Common myeloid progenitor, CD34-positive (primary cell): ENCODE measurements at regions of chr11 and their contacts with region 1.

Region 1: GRCh38 chr11:72144807-72145560 is 9.5 kb downstream of the FOLR3 start:
- DNase-seq: no peak
- H3K4me3 ChIP-seq: no peak overlapping the region
- H3K27ac ChIP-seq: no peak overlapping the region
- H3K4me1 ChIP-seq: peaks cover 0 to 4% (median 2%) of the 10 kb centered on the region in 4 experiments
- H3K27me3 ChIP-seq: no peaks in the 10 kb centered on the region

Region 2: GRCh38 chr11:71895961-71896360 is 249.0 kb before region 1 on chr11:
- CTCF ChIA-PET with region 1: no interaction called
- POLR2A ChIA-PET with region 1: no interaction called
- DNase-seq: no peak
- H3K4me3 ChIP-seq: no peak overlapping the region
- H3K27ac ChIP-seq: no peak overlapping the region
- H3K4me1 ChIP-seq: no peaks in the 10 kb centered on the region
- H3K27me3 ChIP-seq: no peaks in the 10 kb centered on the region

Region 3: DNA sequence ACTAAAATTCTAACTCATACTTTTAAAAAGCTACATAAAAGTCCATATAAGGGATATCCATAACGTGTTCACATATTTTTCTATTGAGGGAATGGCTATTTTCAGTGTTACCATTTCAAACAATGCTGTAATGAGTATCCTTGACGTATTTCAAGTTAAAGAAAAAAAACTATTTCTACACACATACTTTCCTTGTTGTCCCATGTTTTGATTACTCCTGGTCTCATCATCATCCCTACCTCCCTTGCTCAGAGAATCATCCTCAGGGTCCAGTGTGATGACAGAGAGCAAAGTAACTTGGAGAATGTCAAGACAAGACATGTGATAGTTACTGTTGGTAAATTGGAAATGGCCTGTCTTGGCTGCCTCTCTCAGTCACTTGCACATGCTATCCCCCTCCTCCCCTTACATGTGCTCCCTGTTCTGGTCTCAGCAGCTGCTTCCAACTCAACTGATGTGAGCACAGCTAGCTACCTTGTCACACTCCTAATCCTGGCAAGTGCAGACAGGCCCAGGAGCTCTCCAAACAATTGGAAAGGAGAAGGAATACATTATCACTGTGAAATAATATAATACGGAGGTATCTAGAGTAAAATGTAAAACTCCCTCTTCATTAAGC is 86.5 kb before region 1 on chr11:
- CTCF ChIA-PET with region 1: no interaction called
- POLR2A ChIA-PET with region 1: no interaction called
- DNase-seq: no peak
- H3K4me3 ChIP-seq: no peak overlapping the region
- H3K27ac ChIP-seq: no peak overlapping the region
- H3K4me1 ChIP-seq: no peaks in the 10 kb centered on the region
- H3K27me3 ChIP-seq: no peaks in the 10 kb centered on the region

Region 4: GRCh38 chr11:72085621-72086351 is 59.2 kb before region 1 on chr11:
- CTCF ChIA-PET with region 1: interaction called, 40 read pairs
- POLR2A ChIA-PET with region 1: no interaction called
- DNase-seq: no peak
- H3K4me3 ChIP-seq: no peak overlapping the region
- H3K27ac ChIP-seq: peak overlapping the region in 1 of 2 experiments; percentile 15
- H3K4me1 ChIP-seq: peaks cover 6 to 23% (median 20%) of the 10 kb centered on the region in 4 experiments
- H3K27me3 ChIP-seq: no peaks in the 10 kb centered on the region

Region 5: DNA sequence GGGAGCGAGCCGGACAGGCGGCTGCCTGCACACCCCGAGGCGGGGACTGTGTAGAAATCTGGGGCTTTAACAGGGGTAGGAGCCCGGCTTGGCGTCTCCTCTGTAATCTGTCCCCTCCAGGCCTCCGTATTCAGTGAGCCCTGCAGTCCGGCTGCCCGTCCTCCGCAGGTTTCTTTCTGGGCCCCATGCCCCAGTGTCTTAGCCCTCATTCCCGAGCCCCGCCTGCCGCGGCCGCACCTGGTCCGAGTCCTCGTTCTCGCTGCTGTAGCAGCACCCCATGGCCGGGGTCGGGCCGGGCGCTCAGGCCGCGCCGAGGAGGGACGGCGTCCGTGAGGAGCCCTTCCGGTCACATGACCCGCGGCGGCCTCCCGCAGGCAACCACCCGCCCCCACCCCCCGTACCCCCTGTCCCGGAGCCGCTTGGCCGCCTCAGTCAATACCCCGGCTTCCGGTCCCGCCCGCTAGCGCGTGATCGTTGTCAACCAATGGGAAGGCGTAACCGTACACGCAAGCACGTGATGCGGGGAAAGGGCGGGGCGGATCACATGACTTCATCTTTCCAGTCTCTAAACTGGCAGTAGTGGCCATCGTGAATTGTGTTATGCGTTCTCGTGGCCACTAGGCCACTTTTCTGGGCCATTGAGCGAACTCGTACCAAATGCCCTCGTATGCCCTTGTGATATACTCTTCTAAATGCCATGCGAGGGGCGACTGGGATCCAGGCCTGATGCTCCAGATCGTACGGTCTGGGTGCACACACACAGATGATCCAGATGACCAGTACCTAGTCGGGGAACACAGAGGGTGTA is 41.8 kb before region 1 on chr11 and contains the start of gene LAMTOR1:
- CTCF ChIA-PET with region 1: interaction called, 14 read pairs
- POLR2A ChIA-PET with region 1: no interaction called
- DNase-seq: peak; percentile 99 to 100 (median 100)
- H3K4me3 ChIP-seq: peak within 1 kb of the TSS; percentile 72 to 94 (median 87)
- H3K27ac ChIP-seq: peak within 1 kb of the TSS; percentile 95 to 96
- H3K4me1 ChIP-seq: peaks cover 36 to 54% (median 51%) of the 10 kb centered on the region in 4 experiments
- H3K27me3 ChIP-seq: no peaks in the 10 kb centered on the region

Region 6: GRCh38 chr11:72112321-72113219 is 32.4 kb before region 1 on chr11 and contains the start of gene ANAPC15:
- CTCF ChIA-PET with region 1: interaction called, 13 read pairs
- POLR2A ChIA-PET with region 1: no interaction called
- DNase-seq: peak; percentile 100
- H3K4me3 ChIP-seq: peak within 1 kb of the TSS; percentile 64 to 92 (median 78)
- H3K27ac ChIP-seq: peak within 1 kb of the TSS; percentile 97 to 99
- H3K4me1 ChIP-seq: peaks cover 13 to 18% (median 16%) of the 10 kb centered on the region in 4 experiments
- H3K27me3 ChIP-seq: no peaks in the 10 kb centered on the region

Region 7: DNA sequence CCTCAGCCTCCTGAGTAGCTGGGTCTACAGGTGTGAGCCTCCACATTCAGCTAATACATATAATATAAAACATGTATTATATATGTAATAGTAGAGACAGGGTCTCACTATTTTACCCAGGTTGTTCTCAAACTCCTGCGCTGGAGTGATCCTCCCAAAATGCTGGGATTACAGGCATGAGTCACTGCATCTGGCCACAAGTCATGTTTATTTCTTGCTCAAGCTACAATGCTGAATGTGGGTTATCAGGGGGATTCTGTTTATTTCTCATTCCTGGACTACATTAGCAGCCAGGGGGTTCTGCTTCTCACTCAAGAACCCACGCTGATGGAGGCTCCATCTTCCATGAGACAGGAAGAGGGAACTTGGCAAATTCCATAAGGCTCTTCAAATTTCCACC is 15.3 kb after region 1 on chr11:
- CTCF ChIA-PET with region 1: interaction called, 20 read pairs
- POLR2A ChIA-PET with region 1: no interaction called
- DNase-seq: no peak
- H3K4me3 ChIP-seq: no peak overlapping the region
- H3K27ac ChIP-seq: no peak overlapping the region
- H3K4me1 ChIP-seq: no peaks in the 10 kb centered on the region
- H3K27me3 ChIP-seq: no peaks in the 10 kb centered on the region

Region 8: GRCh38 chr11:72598906-72599305 is 453.9 kb after region 1 on chr11:
- CTCF ChIA-PET with region 1: no interaction called
- POLR2A ChIA-PET with region 1: no interaction called
- DNase-seq: no peak
- H3K4me3 ChIP-seq: no peak overlapping the region
- H3K27ac ChIP-seq: no peak overlapping the region
- H3K4me1 ChIP-seq: no peaks in the 10 kb centered on the region
- H3K27me3 ChIP-seq: peaks cover 0 to 7% (median 0%) of the 10 kb centered on the region in 5 experiments